ENCODE measurements at regions of chr19 and their contacts with region 1.

Region 1: GRCh38 chr19:47348819-47349795 is at the start of gene DHX34:
- DNase-seq: peak; percentile 99
- ATAC-seq: peak; percentile 100
- H3K4me3 ChIP-seq: peak within 1 kb of the TSS; percentile 59 to 70
- H3K27ac ChIP-seq: no peak within 1 kb of the TSS
- H3K4me1 ChIP-seq: no peaks in the 10 kb centered on the region
- H3K27me3 ChIP-seq: no peaks in the 10 kb centered on the region
- total RNA-seq, gene DHX34: 8.9 to 14.6 TPM

Region 2: GRCh38 chr19:47310819-47311218 is 38.3 kb before region 1 on chr19:
- intact Hi-C with region 1: loop called in 1 of 2 experiments (anchors 5 kb)
- DNase-seq: peak; percentile 74 to 82
- ATAC-seq: no peak
- H3K4me3 ChIP-seq: no peak overlapping the region
- H3K27ac ChIP-seq: no peak overlapping the region
- H3K4me1 ChIP-seq: peaks cover 0 to 3% of the 10 kb centered on the region in 2 donors
- H3K27me3 ChIP-seq: no peaks in the 10 kb centered on the region

Measured in aorta (tissue), 5 donors.